Ascending aorta (tissue), 2 donors: ENCODE measurements at regions of chr1 and their contacts with region 1.

Region 1: DNA sequence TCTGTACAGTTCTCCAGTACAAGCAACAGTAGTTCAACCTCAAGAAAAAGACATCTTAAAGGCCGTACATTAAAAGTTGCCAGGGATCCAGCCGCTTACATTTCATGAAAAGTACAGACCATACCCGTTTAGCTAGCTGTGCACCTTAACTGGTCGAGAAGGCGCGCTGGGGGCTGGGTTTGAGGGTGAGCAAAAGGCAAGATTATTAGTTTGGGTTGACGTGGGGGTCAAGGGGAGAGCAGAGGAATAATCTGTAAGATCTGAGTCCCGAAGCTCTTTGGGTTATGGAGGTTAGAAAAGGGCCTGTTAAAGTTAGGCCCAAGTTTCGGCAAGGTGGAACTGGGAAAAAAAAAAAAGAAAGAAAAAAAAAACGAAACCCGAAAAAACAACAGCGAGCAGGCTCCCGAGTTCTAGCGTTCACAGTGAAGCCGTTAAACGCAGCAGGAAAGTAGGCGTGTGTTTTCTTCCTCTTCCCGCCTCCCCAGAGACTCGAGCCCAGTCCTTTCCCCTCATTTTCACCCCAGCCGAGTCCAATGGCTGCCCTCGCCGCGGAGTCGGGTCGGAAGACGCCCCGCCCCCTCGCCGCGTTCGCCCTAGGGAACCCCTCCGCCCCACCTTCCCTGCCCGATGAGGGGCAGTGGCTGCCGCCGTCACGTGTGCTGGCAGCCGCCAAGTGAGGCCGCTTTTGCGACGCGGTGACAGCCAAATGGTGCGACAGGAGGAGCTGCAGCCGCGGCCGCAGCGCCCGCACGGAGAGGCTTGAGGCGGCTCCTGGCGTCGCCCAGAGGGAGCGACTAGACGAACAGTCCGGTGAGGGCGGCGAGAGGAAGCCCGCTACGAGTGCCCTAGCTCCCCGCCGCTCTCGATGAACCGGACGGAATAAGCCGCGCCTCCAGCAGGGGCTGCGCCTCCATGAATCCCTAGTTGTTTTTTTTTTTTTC is at the start of gene PKN2:
- DNase-seq: peak; percentile 88 to 99
- H3K4me3 ChIP-seq: peak within 1 kb of the TSS; percentile 86 to 88
- H3K27ac ChIP-seq: peak within 1 kb of the TSS; percentile 84 to 94
- H3K4me1 ChIP-seq: peaks cover 0 to 16% of the 10 kb centered on the region in 2 donors
- H3K27me3 ChIP-seq: no peaks in the 10 kb centered on the region
- CTCF ChIP-seq: peak in 2 of 3 experiments; percentile 34
- total RNA-seq, gene PKN2: 7.3 TPM

Region 2: GRCh38 chr1:86913896-86914634 is 1769.7 kb before region 1 on chr1 and contains the start of gene SELENOF:
- intact Hi-C with region 1: loop called (anchors 5 kb)
- DNase-seq: peak; percentile 99 to 100
- H3K4me3 ChIP-seq: peak within 1 kb of the TSS; percentile 82 to 85
- H3K27ac ChIP-seq: peak within 1 kb of the TSS; percentile 82 to 92
- H3K4me1 ChIP-seq: peaks cover 0 to 17% of the 10 kb centered on the region in 2 donors
- H3K27me3 ChIP-seq: no peaks in the 10 kb centered on the region
- CTCF ChIP-seq: no peak
- total RNA-seq, gene SELENOF: 124 TPM

Region 3: DNA sequence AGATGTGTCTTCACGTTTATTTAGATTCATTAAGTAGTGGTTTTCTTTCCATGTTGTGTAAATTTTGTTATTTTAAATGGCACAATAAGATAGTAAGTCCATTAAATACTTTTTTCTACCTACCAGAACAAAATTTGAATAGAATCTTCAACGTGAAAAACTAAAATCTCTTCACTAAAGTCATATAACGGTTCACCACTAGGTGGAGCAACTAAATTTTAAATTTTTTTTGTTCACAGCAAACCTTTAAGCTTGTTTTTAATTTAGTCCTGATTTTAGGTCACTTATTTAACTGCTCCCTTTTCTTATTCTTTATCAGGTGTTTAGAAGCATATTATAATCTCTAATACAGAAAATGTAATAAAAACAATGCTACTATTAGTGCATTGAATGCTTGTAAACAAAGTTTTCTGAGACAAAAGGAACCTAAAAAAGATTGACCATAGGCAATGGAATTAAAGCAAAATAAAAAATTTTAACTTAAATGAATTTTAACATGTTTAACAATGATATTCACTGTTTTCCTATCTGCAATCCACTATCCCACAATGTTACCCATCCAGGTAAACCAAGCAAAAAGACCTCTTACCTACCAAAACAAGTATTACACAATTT is 28.0 kb before region 1 on chr1:
- intact Hi-C with region 1: loop called (anchors 2 kb)
- DNase-seq: no peak
- H3K4me3 ChIP-seq: no peak overlapping the region
- H3K27ac ChIP-seq: no peak overlapping the region
- H3K4me1 ChIP-seq: no peaks in the 10 kb centered on the region
- H3K27me3 ChIP-seq: no peaks in the 10 kb centered on the region
- CTCF ChIP-seq: peak; percentile 35 to 59 (median 57)

Region 4: DNA sequence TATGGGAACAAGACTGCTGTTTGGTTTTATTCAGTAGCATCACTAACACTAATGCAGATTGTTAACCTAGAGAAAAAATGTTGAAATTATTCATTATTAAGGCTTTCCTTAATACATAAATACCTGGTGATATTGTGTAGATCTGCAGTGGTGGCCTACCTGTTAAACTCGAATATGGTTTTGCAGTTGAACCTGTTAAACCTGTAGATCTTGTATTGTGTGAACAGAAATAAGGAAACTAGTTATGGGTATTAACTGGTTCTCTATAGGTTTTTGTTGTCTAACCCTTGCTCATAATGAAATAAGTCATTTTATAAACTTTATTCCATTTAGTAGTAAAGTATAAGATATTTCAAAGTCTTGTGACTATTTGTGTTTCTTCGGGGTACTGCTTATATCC is 24.2 kb after region 1 on chr1:
- intact Hi-C with region 1: no loop called
- DNase-seq: no peak
- H3K4me3 ChIP-seq: no peak overlapping the region
- H3K27ac ChIP-seq: no peak overlapping the region
- H3K4me1 ChIP-seq: no peaks in the 10 kb centered on the region
- H3K27me3 ChIP-seq: no peaks in the 10 kb centered on the region
- CTCF ChIP-seq: no peak

Region 5: DNA sequence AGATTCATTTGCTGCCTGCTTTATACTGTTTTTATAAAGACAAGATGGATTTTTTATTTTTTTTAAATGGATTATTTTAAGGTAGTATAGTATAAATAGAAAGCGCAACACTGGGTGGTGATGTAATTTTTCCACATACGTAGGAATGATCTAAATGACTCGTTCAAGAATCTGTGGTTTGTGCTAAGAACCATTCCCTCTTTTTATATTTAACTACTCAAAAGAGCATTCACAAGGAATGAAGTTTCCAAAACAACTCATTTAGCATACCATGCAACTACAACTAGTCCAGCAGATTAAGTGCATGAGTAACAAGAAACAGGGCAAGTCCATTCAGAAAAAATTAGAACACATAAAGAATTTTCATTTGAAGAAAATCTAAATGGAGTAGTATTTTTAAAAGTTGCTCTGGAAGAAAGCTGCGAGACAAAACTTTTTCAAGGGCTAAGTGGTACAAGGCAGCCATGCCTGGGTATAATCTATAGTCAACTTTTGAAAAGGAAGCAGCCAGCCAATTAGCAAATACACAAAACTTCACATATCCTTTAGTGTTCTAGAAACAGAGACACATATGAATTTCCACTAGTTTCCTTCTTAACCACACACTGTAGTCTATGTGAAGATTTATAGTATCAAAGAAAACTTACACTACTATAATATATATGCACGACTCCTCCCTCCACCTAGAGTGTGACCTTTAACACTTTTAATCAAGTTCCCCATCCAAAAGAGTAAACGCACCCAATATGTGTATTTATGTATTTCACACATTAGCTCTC is 184.1 kb after region 1 on chr1:
- intact Hi-C with region 1: no loop called
- DNase-seq: no peak
- H3K4me3 ChIP-seq: no peak overlapping the region
- H3K27ac ChIP-seq: peak overlapping the region in 1 of 2 donors; percentile 36
- H3K4me1 ChIP-seq: peaks cover 0 to 9% of the 10 kb centered on the region in 2 donors
- H3K27me3 ChIP-seq: no peaks in the 10 kb centered on the region
- CTCF ChIP-seq: no peak

Region 6: GRCh38 chr1:88891318-88891950 is 207.6 kb after region 1 on chr1 and contains the start of gene GTF2B:
- intact Hi-C with region 1: loop called (anchors 2 kb)
- DNase-seq: peak; percentile 78 to 96
- H3K4me3 ChIP-seq: peak within 1 kb of the TSS; percentile 62 to 95
- H3K27ac ChIP-seq: peak within 1 kb of the TSS; percentile 91 to 99
- H3K4me1 ChIP-seq: peaks cover 2 to 11% of the 10 kb centered on the region in 2 donors
- H3K27me3 ChIP-seq: no peaks in the 10 kb centered on the region
- CTCF ChIP-seq: peak in 1 of 3 experiments; percentile 6
- total RNA-seq, gene GTF2B: 13.7 TPM

Region 7: DNA sequence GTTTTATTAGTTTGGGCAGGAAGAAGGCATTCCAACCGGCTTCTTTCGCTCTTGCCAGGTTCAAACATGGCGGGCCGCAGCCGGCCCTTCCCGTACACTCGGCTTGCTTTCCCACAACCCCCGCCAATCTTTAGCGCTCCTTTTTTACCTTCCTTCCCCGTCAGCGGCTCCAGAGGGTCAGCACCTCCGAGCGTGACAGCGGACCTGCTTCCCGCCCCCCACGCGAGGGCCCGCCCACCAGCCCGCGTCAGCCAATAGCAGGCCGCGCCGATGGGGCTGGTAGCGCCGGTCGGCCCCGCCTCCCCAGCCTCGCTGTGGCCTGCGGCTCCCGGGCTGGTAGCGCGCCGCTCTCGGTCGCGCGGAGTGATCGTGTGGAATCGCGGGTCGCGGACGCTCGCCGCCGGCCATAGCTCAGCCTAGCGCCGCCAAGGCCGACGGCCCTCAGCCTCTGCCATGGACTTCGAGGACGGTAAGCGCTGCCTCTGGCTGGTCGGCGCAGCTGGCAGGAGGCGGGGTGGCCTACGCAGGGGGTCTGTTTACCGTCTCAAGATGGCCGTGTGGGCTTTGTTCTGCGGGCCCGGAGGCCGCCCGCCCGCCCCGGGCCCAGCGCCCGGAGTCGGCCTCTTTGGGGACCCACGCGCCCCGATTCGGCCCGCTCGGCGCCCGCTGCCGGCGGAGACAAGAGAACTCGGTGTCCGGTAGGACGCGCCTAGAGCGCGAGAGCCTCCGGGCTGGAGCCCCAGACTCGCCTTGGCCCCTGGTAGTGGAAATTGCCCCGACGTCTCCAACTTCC is 1311.2 kb after region 1 on chr1 and contains the start of gene ZNF326:
- intact Hi-C with region 1: loop called (anchors 5 kb)
- DNase-seq: peak; percentile 81 to 97
- H3K4me3 ChIP-seq: peak within 1 kb of the TSS; percentile 71 to 93
- H3K27ac ChIP-seq: peak within 1 kb of the TSS; percentile 85 to 97
- H3K4me1 ChIP-seq: peaks cover 0 to 17% of the 10 kb centered on the region in 2 donors
- H3K27me3 ChIP-seq: no peaks in the 10 kb centered on the region
- CTCF ChIP-seq: peak in 1 of 3 experiments; percentile 9
- total RNA-seq, gene ZNF326: 0.75 TPM